GM13976 (cell line): ENCODE measurements at regions of chr9 and their contacts with region 1.

Region 1: DNA sequence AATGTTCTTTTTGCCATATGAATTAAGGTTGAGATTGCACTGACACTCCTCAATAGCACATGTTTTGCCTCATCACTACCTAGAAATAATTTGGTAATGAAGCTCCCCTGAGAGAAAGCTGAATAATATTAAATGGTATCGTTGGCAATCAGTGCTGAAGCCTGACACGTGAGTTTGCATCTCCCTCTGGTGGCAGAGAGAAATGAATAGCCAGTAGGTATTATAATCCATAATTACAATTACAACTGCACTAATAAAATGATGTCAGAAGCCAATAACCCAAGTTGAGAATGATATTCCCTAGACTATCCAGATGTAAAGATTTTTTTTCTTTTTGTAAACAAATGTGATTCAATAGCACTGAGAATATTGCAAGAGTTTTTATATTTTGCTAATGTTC is 700.3 kb downstream of the PTPRD start:
- DNase-seq: no peak
- CTCF ChIP-seq: no peak

Region 2: GRCh38 chr9:9305600-9305999 is 606.9 kb before region 1 on chr9:
- in situ Hi-C with region 1: no loop called
- DNase-seq: no peak
- CTCF ChIP-seq: no peak

Region 3: GRCh38 chr9:9612270-9612669 is 300.2 kb before region 1 on chr9:
- in situ Hi-C with region 1: loop called (anchors 25 kb)
- DNase-seq: no peak
- CTCF ChIP-seq: no peak